Mammary epithelial cell (primary cell): ENCODE measurements at regions of chr3 and their contacts with region 1.

Region 1: GRCh38 chr3:177893321-177893720 is 642.9 kb upstream of the KCNMB2 start:
- DNase-seq: no peak
- H3K4me3 ChIP-seq: no peak overlapping the region
- H3K27ac ChIP-seq: no peak overlapping the region
- H3K4me1 ChIP-seq: no peaks in the 10 kb centered on the region
- H3K27me3 ChIP-seq: no peaks in the 10 kb centered on the region
- CTCF ChIP-seq: peak in 1 of 2 donors; percentile 22

Region 2: GRCh38 chr3:177827511-177828207 is 65.7 kb before region 1 on chr3:
- CTCF ChIA-PET with region 1: no interaction called
- dilution Hi-C with region 1: no loop called
- in situ Hi-C with region 1: no loop called
- intact Hi-C with region 1: no loop called
- DNase-seq: peak; percentile 93
- H3K4me3 ChIP-seq: no peak overlapping the region
- H3K27ac ChIP-seq: peak overlapping the region; percentile 78
- H3K4me1 ChIP-seq: peaks cover 52% of the 10 kb centered on the region
- H3K27me3 ChIP-seq: no peaks in the 10 kb centered on the region
- CTCF ChIP-seq: no peak

Region 3: DNA sequence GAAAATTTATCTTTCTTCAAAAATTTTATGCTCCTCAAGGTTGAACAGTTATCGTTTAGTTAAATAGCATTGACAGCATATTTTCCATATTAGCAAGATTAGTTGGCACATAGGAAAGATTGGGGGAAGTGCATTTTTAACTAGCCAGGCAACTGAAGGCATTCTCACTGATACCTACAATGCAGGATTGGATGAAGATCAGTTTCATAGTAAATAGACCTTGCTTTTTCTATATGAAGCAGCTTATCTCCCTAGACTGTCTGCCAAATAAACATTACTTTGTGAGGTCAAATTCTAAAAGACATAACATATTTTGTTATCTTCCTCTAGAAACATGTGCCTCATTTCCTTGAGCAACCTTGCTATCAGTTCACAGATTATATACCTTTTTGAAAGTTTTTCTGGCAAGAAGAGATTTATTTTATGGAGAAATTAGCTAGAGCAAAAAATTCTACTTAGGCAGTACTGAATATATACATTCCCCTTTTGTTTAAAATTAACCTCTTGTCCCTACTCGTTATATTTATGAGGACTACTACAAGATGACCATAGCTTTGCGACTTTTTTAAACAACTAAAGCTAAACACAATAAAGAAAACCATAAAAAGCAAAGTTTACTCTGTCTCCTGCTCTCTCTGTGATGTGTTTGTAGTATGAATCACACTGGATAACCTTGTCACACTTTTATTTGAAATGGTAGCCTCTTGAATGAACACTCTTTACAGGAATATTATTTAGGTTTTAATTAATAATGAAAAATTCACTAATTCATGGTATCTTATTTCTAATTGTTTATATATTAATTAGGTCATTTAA is 41.1 kb before region 1 on chr3:
- CTCF ChIA-PET with region 1: interaction called, 12 read pairs
- dilution Hi-C with region 1: no loop called
- in situ Hi-C with region 1: no loop called
- intact Hi-C with region 1: no loop called
- DNase-seq: no peak
- H3K4me3 ChIP-seq: no peak overlapping the region
- H3K27ac ChIP-seq: no peak overlapping the region
- H3K4me1 ChIP-seq: no peaks in the 10 kb centered on the region
- H3K27me3 ChIP-seq: no peaks in the 10 kb centered on the region
- CTCF ChIP-seq: no peak